ENCODE measurements at regions of chr2 and their contacts with region 1.

Region 1: DNA sequence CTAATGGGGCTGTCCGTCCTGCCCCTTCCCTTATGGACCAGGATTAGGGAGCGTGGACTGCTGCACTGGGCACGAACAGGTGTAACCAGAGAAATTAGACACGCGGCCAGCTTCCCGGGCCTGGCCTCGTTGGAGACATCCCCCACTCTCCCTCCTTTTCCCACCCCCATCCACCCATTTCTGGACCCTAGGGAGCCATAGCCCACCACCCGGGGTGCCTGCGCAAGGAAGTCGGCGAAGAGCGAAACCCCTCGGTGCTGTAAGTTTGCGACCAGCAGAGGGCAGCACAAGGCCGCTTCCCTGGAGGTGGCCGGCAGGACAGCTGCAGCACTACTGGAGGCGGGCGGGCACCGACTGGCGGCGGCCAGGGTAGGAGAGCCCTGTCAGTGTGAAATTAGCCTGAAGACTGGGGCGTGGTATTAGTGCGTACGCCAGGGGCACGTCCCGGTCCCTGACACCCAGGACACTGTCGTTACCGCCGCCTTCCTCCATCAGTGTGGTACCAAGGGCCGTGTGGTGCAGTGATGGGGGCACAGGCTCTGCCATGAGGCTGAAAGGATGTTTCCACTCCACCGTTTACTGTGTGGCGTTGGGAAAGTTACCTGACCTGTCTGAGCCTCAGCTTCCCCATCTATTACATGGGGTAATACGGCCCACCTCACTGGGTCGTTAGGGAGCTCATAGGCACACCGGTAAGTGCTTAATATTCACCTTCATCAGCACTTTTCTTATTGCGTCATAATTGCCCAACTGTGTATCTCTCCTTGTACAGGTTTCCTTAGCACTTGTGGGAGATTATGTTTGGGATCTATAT is 36.0 kb upstream of the CD207 start:
- H3K4me3 ChIP-seq: peak overlapping the region; percentile 19
- H3K27ac ChIP-seq: no peak overlapping the region
- H3K4me1 ChIP-seq: no peaks in the 10 kb centered on the region; the same call in 1 of the 2 replicates
- CTCF ChIP-seq: peak; percentile 98

Region 2: DNA sequence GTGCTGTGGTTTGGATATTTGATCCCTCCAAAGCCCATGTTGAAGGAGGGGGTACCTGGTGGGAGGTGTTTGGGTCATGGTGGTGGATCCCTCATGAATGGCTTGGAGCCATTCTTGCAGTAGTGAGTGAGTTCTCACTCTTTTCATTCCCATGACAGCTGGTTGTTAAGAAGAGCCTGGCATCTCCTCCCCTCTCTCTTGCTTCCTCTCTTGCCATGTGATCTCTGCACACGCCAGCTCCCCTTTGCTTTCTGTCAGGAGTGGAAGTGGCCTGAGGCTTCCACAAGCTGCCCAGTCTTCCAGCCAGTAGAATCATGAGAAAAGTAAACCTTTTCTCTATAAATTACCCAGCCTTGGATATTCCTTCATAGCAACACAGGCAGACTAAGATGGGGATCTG is 112.2 kb before region 1 on chr2:
- CTCF ChIA-PET with region 1: no interaction called
- POLR2A ChIA-PET with region 1: no interaction called
- H3K4me3 ChIP-seq: no peak overlapping the region
- H3K27ac ChIP-seq: no peak overlapping the region
- H3K4me1 ChIP-seq: no peaks in the 10 kb centered on the region
- CTCF ChIP-seq: no peak

Region 3: GRCh38 chr2:70789304-70790135 is 82.1 kb before region 1 on chr2:
- CTCF ChIA-PET with region 1: interaction called, 32 read pairs
- POLR2A ChIA-PET with region 1: no interaction called
- H3K4me3 ChIP-seq: no peak overlapping the region
- H3K27ac ChIP-seq: no peak overlapping the region
- H3K4me1 ChIP-seq: no peaks in the 10 kb centered on the region
- CTCF ChIP-seq: peak; percentile 84

Region 4: DNA sequence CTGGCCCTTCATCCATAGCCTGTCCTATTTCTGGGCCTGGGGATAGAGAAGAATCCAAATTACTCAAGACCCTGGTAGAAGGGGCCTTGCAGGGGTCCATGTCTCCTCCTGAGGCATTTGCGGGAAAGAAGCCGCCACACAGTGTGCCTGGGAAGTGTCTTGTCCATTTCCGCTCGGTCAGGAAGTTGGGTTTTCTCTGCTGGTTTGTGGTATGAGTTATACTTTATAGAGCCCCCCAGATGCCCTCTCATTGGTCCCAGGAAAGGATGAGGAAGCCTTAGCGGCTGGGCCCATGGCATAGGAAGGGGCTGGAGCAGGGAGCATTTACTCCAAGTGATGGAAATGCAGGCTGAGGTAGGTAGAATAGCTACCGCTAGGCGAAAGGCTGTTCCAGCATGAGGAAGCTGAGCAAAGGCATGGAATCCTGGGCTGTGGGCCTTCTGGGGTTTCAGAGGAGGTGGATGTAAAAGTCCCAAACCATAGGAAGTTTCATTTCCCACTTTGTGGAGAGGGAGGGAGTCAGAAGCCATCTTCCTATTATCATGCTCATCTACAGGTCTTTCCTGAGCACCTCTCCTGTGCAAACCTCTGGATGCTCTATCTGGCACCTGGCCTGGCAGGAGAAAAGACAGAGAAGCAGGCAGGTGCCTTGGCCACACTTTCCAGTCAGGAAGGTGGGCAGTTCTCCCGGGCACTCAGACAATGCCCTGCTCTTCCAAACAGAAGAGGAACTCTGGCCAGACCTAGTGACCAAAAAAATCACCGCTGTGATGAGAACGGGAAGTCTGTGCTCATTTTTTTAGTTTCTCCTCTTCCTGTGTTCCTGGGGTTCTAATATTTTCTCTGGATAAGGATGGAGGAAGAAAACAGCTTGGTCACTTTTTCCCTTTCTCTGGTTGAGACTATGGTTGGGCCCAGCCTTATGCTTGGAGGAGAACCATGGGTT is 33.4 kb before region 1 on chr2:
- CTCF ChIA-PET with region 1: no interaction called
- POLR2A ChIA-PET with region 1: no interaction called
- H3K4me3 ChIP-seq: no peak overlapping the region
- H3K27ac ChIP-seq: no peak overlapping the region
- H3K4me1 ChIP-seq: no peaks in the 10 kb centered on the region
- CTCF ChIP-seq: no peak

Region 5: GRCh38 chr2:70907130-70908057 is 35.8 kb after region 1 on chr2:
- CTCF ChIA-PET with region 1: interaction called, 19 read pairs
- POLR2A ChIA-PET with region 1: interaction called, 4 read pairs
- H3K4me3 ChIP-seq: no peak overlapping the region
- H3K27ac ChIP-seq: no peak overlapping the region
- H3K4me1 ChIP-seq: no peaks in the 10 kb centered on the region; the same call in 1 of the 2 replicates
- CTCF ChIP-seq: no peak

Region 6: DNA sequence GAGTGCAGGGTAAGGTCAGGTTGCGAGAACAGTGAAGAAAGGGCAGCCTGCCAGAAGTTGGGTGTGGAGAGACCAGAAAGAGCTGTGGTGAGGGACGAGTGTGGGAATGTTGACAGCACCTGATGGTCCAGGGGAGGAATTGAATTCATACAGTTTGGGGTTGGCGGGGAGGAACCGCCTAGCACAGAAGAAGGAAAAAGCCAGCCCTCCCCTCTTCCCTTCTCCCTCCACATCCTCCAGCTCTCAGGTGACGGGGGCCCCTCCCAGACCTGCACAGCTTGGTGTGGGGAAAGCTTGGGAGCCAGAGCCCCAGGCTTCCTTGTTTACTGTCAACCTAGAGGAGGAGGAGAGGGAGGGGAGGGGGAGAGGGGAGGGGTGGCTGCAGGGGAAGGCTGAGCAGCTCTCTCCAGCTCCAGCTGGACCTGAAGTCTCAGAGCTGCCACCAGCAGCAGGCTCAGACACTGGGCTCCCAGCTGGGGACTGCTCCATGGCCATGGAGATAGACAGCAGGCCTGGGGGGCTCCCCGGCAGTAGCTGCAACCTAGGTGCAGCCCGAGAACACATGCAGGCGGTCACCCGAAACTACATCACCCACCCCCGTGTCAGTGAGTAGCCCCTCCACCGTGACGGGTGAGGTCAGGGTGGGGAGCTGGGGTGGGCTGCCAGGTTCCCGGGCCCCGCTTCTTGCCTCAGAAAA is 64.0 kb after region 1 on chr2 and contains the start of gene ATP6V1B1:
- CTCF ChIA-PET with region 1: interaction called, 11 read pairs
- POLR2A ChIA-PET with region 1: no interaction called
- H3K4me3 ChIP-seq: no peak within 1 kb of the TSS
- H3K27ac ChIP-seq: no peak within 1 kb of the TSS
- H3K4me1 ChIP-seq: no peaks in the 10 kb centered on the region
- CTCF ChIP-seq: no peak

Region 7: DNA sequence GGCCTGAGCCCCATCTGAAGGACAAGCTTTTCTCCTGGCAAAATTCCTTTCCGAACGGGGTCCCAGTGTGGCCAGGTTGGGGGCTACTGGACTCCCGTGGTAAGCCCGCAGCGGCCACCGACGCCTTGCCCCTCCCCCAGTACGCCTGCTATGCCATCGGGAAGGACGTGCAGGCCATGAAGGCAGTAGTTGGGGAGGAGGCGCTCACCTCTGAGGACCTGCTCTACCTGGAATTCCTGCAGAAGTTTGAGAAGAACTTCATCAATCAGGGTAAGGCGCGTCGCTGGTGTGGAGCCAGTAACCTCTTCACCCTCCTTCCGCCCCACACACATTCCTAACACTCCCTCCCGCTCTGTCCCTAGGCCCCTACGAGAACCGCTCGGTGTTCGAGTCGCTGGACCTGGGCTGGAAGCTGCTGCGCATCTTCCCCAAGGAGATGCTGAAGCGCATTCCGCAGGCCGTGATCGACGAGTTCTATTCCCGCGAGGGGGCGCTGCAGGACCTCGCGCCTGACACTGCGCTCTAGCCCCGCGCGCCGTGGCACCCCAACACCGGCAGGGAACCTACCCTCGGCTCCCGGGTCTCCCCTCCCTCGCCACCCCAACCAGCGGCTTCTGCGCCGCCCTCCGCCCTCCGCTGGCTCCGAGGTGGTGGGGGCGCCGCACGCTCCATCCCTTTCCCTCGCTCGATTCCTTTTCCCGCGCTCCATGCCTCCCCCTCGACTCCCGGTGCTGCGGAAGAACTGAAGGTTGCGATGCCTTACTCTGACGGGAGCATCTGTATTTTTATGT is 93.2 kb after region 1 on chr2:
- CTCF ChIA-PET with region 1: interaction called, 11 read pairs
- POLR2A ChIA-PET with region 1: no interaction called
- H3K4me3 ChIP-seq: no peak overlapping the region
- H3K27ac ChIP-seq: no peak overlapping the region
- H3K4me1 ChIP-seq: no peaks in the 10 kb centered on the region
- CTCF ChIP-seq: no peak